Activated naive CD4-positive, alpha-beta T cell treated with anti-CD3 and anti-CD28 coated beads for 36 hours (primary cell): ENCODE measurements at regions of chr9 and their contacts with region 1.

Region 1: GRCh38 chr9:1604942-1605560 is 410.1 kb upstream of the SMARCA2 start:
- DNase-seq: peak; percentile 5
- H3K4me3 Mint-ChIP-seq: no peak overlapping the region
- H3K27ac Mint-ChIP-seq: no peak overlapping the region
- H3K4me1 Mint-ChIP-seq: no peaks in the 10 kb centered on the region
- H3K27me3 Mint-ChIP-seq: peaks cover 9% of the 10 kb centered on the region

Region 2: GRCh38 chr9:1018121-1018701 is 586.8 kb before region 1 on chr9:
- CTCF ChIA-PET with region 1: no interaction called
- intact Hi-C with region 1: loop called (anchors 1 kb)
- DNase-seq: peak; percentile 57
- H3K4me3 Mint-ChIP-seq: no peak overlapping the region
- H3K27ac Mint-ChIP-seq: no peak overlapping the region
- H3K4me1 Mint-ChIP-seq: peaks cover 3% of the 10 kb centered on the region
- H3K27me3 Mint-ChIP-seq: peaks cover 23% of the 10 kb centered on the region

Region 3: DNA sequence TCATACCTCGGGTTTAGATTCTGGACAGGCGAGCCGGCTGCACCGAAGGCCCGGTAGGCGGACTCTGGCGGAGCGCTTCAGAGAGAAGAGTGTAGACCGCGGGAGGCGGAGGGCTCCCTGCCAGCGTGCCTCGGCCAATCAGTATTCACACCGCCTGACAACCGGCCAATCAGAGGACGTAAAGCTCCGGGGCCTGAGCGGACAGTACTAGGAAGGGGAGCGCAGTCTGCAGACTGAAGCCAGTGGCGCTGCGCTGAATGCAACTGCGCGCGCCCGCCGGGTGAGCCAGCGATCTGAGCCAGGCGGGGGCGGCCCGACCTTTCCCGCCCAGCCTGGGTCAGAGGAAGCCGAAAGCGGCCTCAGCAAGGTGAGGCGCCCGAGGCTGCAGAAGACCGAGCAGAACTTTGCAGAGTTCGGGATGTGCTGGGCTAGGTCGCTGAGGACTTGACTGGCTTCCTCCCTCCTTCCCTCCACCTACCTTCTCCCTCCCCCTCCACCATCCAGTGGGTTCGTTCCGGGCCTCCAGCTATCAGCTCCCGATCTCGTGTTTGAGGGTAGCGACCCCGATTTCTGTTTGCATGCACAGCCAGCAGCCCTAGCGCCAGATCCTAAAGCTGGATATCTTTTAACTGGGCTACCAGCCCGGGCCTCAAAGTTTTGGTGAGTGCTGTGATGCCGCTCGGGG is 554.8 kb before region 1 on chr9 and contains the start of gene DMRT2:
- CTCF ChIA-PET with region 1: no interaction called
- intact Hi-C with region 1: loop called (anchors 10 kb)
- DNase-seq: peak; percentile 60
- H3K4me3 Mint-ChIP-seq: peak within 1 kb of the TSS; percentile 53
- H3K27ac Mint-ChIP-seq: no peak within 1 kb of the TSS
- H3K4me1 Mint-ChIP-seq: peaks cover 60% of the 10 kb centered on the region
- H3K27me3 Mint-ChIP-seq: peaks cover 91% of the 10 kb centered on the region
- total RNA-seq, gene DMRT2: not detected

Region 4: DNA sequence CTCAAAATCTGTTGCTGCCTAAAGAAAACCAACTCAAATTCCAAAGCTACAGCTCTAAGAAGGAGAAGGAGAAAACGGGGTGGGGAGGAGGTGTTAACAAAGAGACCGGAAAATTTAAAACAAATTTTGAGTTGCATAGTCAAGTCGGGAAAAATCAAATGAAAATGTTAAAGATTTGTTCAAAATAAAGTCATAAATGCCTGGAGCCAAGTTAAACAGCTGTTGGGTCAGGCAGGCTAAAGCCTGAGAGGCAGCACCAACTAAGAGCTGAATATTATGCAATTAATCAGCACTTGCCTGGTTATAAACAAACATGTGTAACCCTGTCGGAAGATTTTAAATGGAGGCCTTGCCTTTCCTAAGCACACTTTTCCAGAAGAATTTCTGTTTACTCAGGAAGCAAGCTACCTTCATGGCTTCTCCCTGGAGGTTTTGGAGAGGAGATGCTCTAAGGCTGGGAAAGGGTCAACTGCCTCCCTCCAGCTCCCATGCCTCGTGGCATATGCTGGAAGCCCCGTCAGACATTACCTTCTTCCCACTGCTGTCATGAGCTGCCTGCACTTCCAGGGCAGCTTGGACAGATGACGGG is 284.4 kb before region 1 on chr9:
- CTCF ChIA-PET with region 1: no interaction called
- intact Hi-C with region 1: no loop called
- DNase-seq: no peak
- H3K4me3 Mint-ChIP-seq: no peak overlapping the region
- H3K27ac Mint-ChIP-seq: no peak overlapping the region
- H3K4me1 Mint-ChIP-seq: no peaks in the 10 kb centered on the region
- H3K27me3 Mint-ChIP-seq: no peaks in the 10 kb centered on the region

Region 5: DNA sequence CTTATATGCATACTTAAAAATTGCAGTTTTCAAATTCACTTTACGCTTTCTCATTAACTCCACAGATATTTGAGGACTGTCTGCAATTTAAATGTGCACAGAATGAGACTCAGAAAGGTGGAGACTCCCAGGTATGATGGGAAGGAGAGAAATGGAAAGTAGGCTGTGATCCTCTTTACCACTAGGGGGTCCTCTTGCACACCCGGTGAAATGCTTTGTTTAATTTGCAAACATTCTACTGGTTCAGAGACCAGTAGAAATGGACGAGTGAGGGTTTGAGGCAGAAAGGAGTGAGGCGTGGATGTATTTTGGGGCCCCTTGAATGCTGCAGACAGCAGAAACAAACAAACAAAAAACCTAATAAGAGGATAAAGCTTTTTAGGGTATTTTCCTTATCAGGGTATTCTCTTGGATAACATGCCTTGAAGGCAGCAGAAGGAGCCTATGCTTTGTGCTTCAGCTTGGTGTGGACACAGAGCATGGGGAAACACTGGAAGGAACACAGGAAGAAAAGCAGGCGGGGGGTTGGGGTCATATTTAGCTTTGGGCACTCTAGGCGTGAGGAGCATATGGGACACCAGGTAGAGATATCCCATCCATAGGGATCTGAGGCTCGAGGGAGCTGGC is 144.8 kb before region 1 on chr9:
- CTCF ChIA-PET with region 1: interaction called, 3 read pairs
- intact Hi-C with region 1: loop called (anchors 1 kb)
- DNase-seq: peak; percentile 27
- H3K4me3 Mint-ChIP-seq: no peak overlapping the region
- H3K27ac Mint-ChIP-seq: no peak overlapping the region
- H3K4me1 Mint-ChIP-seq: no peaks in the 10 kb centered on the region
- H3K27me3 Mint-ChIP-seq: peaks cover 9% of the 10 kb centered on the region